Heart left ventricle (tissue), 16 donors: ENCODE measurements at regions of chr3 and their contacts with region 1.

Region 1: GRCh38 chr3:40877631-40878463 is 321.5 kb upstream of the CTNNB1 start:
- DNase-seq: peak; percentile 71 to 84 (median 79)
- ATAC-seq: peak; percentile 90 to 93 (median 92)
- H3K4me3 ChIP-seq: peak overlapping the region in 1 of 12 donors; percentile 17
- H3K27ac ChIP-seq: peak overlapping the region; percentile 13 to 88 (median 74)
- H3K4me1 ChIP-seq: peaks cover 4 to 38% (median 28%) of the 10 kb centered on the region in 12 donors
- H3K27me3 ChIP-seq: no peaks in the 10 kb centered on the region
- CTCF ChIP-seq: peak in 1 of 12 donors; percentile 9
- POLR2A ChIP-seq: no peak

Region 2: DNA sequence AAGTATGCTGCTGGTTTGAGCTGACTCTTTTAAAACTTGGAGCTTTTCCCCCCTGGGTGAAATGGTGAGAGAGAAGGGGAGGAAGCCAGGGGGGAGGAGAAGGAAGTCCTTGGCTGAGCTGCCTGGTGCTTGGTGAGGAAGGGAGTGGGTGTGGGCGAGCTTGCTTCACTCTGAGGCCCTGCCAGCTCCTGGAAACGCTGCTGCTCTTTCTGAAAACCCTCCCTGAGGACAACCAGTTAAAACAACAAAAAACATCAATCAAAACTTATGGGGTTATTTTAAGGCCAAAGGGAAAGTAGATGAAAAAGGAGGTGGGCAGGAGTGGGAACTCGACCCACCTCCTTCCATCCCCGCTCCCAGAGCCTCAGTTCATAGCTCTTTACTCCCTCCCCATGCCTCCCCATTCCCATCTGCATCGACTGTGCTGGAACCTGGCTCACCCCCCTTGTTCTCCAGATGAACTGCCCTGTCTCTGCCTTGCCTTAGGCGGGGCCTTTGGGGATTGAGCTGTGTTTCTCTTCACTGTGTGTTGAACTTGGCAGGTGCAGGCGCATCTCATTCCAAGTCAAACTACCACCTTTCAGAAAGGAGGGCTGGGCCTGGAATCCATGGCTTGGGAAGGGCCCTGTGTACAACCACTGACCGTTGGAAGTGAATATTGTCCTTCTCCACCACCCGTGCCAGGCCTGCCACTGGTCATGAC is 186.9 kb before region 1 on chr3:
- intact Hi-C with region 1: loop called in 1 of 10 experiments (anchors 5 kb)
- DNase-seq: peak; percentile 68 to 88 (median 77)
- ATAC-seq: peak; percentile 79 to 93 (median 89)
- H3K4me3 ChIP-seq: no peak overlapping the region
- H3K27ac ChIP-seq: peak overlapping the region in 11 of 12 donors; percentile 24 to 79 (median 54)
- H3K4me1 ChIP-seq: peaks cover 0 to 57% (median 36%) of the 10 kb centered on the region in 12 donors
- H3K27me3 ChIP-seq: no peaks in the 10 kb centered on the region
- CTCF ChIP-seq: no peak
- POLR2A ChIP-seq: no peak

Region 3: GRCh38 chr3:40770061-40770460 is 107.8 kb before region 1 on chr3:
- intact Hi-C with region 1: loop called in 1 of 10 experiments (anchors 5 kb)
- DNase-seq: no peak
- ATAC-seq: peak in 2 of 4 donors; percentile 16 to 82
- H3K4me3 ChIP-seq: no peak overlapping the region
- H3K27ac ChIP-seq: peak overlapping the region in 6 of 12 donors; percentile 6 to 54 (median 36)
- H3K4me1 ChIP-seq: peaks cover 0 to 36% (median 5%) of the 10 kb centered on the region in 12 donors
- H3K27me3 ChIP-seq: no peaks in the 10 kb centered on the region
- CTCF ChIP-seq: no peak
- POLR2A ChIP-seq: no peak

Region 4: GRCh38 chr3:40780291-40780924 is 97.4 kb before region 1 on chr3:
- intact Hi-C with region 1: loop called in 3 of 10 experiments (anchors 2 to 5 kb)
- DNase-seq: peak; percentile 81 to 90 (median 86)
- ATAC-seq: peak; percentile 82 to 90 (median 84)
- H3K4me3 ChIP-seq: peak overlapping the region in 9 of 12 donors; percentile 2 to 41 (median 29)
- H3K27ac ChIP-seq: peak overlapping the region; percentile 70 to 93 (median 80)
- H3K4me1 ChIP-seq: peaks cover 0 to 32% (median 26%) of the 10 kb centered on the region in 12 donors
- H3K27me3 ChIP-seq: no peaks in the 10 kb centered on the region
- CTCF ChIP-seq: peak in 4 of 12 donors; percentile 13 to 20 (median 16)
- POLR2A ChIP-seq: no peak

Region 5: DNA sequence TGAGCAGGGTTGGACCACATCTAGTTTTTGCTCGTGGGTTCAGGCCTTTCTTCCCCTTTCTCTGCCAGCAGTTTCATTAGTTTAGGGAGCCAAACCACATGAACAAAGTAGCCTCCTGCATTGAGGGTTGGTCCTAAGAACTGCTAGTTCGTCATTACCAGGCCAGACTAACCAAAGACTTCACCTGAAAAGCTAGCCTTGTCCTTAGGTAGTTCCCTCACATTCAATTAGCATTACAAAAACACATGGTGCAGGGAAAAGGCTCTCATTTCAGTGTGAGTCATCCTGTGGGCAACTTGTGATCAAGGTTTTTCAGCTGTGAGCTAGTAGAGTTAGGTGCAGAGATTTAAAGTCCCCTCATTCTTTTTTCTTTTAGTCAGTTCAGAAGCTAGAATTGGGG is 42.2 kb after region 1 on chr3:
- intact Hi-C with region 1: no loop called
- DNase-seq: no peak
- ATAC-seq: no peak
- H3K4me3 ChIP-seq: no peak overlapping the region
- H3K27ac ChIP-seq: no peak overlapping the region
- H3K4me1 ChIP-seq: no peaks in the 10 kb centered on the region
- H3K27me3 ChIP-seq: no peaks in the 10 kb centered on the region
- CTCF ChIP-seq: no peak
- POLR2A ChIP-seq: no peak

Region 6: GRCh38 chr3:40971191-40972168 is 93.6 kb after region 1 on chr3:
- intact Hi-C with region 1: loop called in 4 of 10 experiments (anchors 1 to 5 kb)
- DNase-seq: peak; percentile 64 to 85 (median 76)
- ATAC-seq: peak; percentile 80 to 96 (median 94)
- H3K4me3 ChIP-seq: no peak overlapping the region
- H3K27ac ChIP-seq: peak overlapping the region; percentile 35 to 88 (median 72)
- H3K4me1 ChIP-seq: peaks cover 8 to 63% (median 54%) of the 10 kb centered on the region in 12 donors
- H3K27me3 ChIP-seq: no peaks in the 10 kb centered on the region
- CTCF ChIP-seq: peak in 1 of 12 donors; percentile 13
- POLR2A ChIP-seq: no peak